ENCODE measurements at regions of chr3 and their contacts with region 1.

Region 1: GRCh38 chr3:69675786-69676530 is 63.3 kb upstream of the MITF start:
- DNase-seq: no peak

Region 2: DNA sequence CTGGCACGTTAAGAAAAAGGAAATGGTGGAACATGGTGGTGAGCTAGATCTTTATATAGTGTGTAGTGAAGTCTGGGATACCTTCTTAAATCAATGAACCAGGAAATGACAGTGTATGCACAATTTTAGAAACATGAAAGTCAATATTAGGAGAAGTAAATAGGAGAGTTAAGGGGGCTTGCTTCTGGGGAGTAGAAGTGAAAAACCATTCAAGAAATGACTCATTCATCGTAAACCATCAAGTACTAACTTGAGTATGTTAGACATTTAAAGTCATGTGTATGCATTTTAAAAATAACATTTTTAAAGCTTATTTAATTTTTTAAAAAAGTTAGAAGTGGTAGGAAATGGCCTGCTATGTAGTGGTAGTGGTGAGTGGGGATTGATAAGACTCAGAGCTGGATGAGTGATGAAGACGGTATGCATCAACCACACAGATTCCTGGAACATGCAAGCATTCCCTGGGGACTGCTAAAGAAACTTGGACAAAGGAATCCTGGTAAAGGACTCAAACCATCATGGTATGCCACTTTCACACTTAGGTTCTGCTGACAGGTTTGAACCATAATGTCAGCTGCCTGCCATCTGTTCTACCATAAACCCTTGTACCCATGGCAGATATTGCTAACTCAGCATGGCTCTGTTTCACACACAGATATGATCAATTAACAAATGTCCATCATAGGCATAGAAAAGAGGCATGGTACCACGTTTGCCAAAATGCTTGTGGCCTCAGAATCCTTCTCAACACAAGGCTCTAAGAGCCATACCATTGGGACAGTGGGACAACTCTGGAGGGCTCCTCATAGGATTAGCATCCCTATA is 34.4 kb after region 1 on chr3:
- in situ Hi-C with region 1: no loop called
- DNase-seq: no peak

Region 3: GRCh38 chr3:69914395-69914794 is 238.4 kb after region 1 on chr3:
- in situ Hi-C with region 1: loop called (anchors 25 kb)
- DNase-seq: no peak

Region 4: DNA sequence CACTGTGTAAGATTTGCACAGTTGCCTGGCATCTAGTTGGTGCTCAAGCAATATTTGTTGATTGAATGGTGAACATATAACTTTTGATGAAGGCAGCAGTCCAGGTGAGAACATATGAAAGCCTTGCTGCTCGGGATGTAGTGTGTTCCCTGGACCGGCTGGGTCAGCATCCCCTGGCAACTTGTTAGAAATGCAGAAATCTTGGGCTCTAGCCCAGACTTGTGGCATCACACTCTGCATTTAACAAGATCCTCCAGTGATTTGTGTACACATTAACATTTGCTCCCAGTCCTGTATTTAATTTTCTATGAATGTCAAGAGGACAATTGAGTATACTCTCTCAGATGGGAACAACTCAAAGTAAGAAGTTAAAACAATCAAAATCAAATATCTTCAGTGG is 254.6 kb after region 1 on chr3:
- in situ Hi-C with region 1: no loop called
- DNase-seq: peak; percentile 25